Endothelial cell of umbilical vein (primary cell): ENCODE measurements at regions of chr6 and their contacts with region 1.

Region 1: DNA sequence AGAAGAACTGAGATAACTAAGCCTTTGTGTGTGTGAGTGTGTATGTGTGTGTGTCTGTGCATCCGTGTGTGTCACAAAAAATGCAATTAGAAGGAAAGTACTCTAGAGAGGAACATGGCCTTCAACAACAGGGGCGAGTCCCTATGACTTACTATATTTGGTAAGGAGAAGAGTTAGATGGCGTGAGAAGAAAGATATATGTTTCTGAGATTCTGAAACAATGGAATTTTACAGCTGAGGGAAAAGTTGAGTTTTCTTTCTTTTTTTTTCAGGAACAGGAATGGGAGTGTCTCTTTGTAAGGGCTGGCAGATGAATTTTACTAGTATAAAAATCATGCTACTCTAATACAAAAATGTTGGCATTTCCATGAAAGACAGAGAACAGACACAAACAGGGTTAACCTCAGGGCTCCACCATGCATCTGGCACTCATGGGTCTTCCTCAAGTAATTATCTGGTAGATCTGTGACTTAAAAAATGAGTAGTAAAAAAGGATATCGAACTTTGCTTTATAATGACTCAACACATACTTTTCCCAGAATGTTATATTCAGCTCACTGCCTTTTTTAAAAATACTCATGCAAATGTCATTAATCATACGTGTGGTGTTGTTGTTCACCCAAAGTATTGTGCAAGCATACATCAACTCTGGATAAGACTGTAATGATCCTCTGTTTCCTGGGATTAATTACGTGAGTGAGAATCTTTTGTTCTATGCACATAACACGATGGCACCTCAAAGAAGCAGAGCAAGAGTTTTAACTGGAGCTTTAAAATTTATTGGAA is 12.8 kb upstream of the SASH1 start:
- DNase-seq: peak; percentile 83
- H3K4me3 ChIP-seq: no peak overlapping the region
- H3K27ac ChIP-seq: peak overlapping the region; percentile 46
- H3K4me1 ChIP-seq: peaks cover 31% of the 10 kb centered on the region
- H3K27me3 ChIP-seq: no peaks in the 10 kb centered on the region
- CTCF ChIP-seq: no peak
- POLR2A ChIP-seq: no peak

Region 2: GRCh38 chr6:148140772-148141557 is 188.8 kb before region 1 on chr6:
- CTCF ChIA-PET with region 1: no interaction called
- POLR2A ChIA-PET with region 1: no interaction called
- dilution Hi-C with region 1: no loop called
- intact Hi-C with region 1: no loop called
- DNase-seq: peak; percentile 44
- H3K4me3 ChIP-seq: no peak overlapping the region
- H3K27ac ChIP-seq: peak overlapping the region; percentile 67
- H3K4me1 ChIP-seq: peaks cover 32% of the 10 kb centered on the region
- H3K27me3 ChIP-seq: no peaks in the 10 kb centered on the region
- CTCF ChIP-seq: no peak
- POLR2A ChIP-seq: no peak

Region 3: DNA sequence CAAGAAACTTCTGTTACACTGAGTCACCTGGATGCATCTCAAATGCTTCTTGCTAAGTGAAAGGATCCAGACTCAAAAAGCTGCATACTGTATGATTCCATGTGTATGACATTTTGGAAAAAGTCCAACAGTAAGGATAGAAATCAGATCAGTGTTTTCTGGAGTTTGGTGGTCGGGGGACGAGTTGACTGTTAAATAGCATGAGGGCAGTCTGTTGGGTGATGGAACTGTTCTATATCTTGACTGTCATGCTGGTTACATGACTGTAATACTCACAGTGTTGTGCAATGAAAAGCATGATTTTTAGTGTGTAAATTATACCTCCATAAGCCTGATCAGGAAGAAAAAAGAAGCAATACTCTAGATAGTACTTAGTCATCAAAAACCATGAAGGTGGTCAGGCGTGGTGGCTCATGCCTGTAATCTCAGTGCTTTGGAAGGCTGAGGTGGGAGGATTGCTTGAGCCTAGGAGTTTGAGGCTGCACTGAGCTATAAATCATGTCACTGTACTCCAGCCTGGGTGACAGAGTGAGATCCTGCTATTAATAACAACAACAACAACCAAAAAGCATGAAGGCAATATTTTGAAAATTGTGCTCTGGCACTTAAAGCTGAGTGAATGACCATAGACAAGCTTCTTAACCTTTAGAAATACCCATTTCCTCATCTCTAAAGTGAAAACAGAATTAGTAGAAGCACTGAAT is 17.7 kb before region 1 on chr6:
- CTCF ChIA-PET with region 1: interaction called, 23 read pairs
- POLR2A ChIA-PET with region 1: no interaction called
- dilution Hi-C with region 1: no loop called
- intact Hi-C with region 1: loop called (anchors 1 kb)
- DNase-seq: no peak
- H3K4me3 ChIP-seq: no peak overlapping the region
- H3K27ac ChIP-seq: no peak overlapping the region
- H3K4me1 ChIP-seq: peaks cover 12% of the 10 kb centered on the region
- H3K27me3 ChIP-seq: no peaks in the 10 kb centered on the region
- CTCF ChIP-seq: no peak
- POLR2A ChIP-seq: no peak

Region 4: GRCh38 chr6:148317739-148318138 is 12.1 kb before region 1 on chr6:
- CTCF ChIA-PET with region 1: interaction called, 23 read pairs
- POLR2A ChIA-PET with region 1: no interaction called
- dilution Hi-C with region 1: no loop called
- intact Hi-C with region 1: loop called (anchors 1 kb)
- DNase-seq: no peak
- H3K4me3 ChIP-seq: no peak overlapping the region
- H3K27ac ChIP-seq: peak overlapping the region; percentile 80
- H3K4me1 ChIP-seq: peaks cover 12% of the 10 kb centered on the region
- H3K27me3 ChIP-seq: no peaks in the 10 kb centered on the region
- CTCF ChIP-seq: no peak
- POLR2A ChIP-seq: no peak

Region 5: DNA sequence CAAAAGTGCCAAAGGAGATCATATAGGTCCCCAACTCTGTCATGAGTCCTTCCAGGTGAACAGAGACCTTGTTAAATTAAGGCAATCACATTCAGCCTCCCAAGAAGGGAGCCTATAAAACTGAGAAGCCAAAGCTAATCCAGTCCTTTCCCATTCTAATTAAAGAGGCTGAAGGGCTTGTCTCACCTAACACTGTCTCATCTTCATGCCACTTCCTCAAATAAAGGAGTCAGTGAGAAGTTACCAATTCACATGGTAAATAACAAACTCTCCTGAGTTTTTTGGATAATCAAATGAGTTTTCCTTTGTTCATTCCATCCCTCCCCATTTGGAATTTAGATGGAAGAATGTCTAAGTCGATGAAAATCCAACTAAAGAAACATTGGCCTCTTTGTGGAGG is 659.8 kb after region 1 on chr6:
- CTCF ChIA-PET with region 1: no interaction called
- POLR2A ChIA-PET with region 1: no interaction called
- dilution Hi-C with region 1: no loop called
- intact Hi-C with region 1: no loop called
- DNase-seq: no peak
- H3K4me3 ChIP-seq: no peak overlapping the region
- H3K27ac ChIP-seq: no peak overlapping the region
- H3K4me1 ChIP-seq: no peaks in the 10 kb centered on the region
- H3K27me3 ChIP-seq: no peaks in the 10 kb centered on the region
- CTCF ChIP-seq: no peak
- POLR2A ChIP-seq: no peak